G401 (cell line): ENCODE measurements at regions of chr19 and their contacts with region 1.

Region 1: DNA sequence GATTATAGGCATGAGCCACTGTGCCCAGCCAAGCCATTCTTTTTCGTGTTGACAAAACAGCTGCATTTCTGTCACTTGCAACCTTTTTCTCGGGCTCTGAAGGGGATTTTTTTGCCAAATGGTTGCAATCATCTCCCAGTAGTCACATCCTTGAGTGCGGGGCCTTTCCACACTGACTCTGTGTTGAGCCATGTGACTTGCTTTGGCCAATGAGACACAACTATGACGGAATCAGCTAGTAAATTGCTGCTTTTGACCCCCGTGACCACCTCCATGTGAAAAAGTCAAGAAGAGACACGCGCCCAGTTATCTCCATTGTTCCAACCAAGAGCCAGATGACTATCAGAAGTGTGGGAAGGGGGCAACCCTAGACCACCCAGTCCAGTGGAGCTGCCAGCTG is 18.3 kb downstream of the NPHS1 start:
- DNase-seq: no peak

Region 2: DNA sequence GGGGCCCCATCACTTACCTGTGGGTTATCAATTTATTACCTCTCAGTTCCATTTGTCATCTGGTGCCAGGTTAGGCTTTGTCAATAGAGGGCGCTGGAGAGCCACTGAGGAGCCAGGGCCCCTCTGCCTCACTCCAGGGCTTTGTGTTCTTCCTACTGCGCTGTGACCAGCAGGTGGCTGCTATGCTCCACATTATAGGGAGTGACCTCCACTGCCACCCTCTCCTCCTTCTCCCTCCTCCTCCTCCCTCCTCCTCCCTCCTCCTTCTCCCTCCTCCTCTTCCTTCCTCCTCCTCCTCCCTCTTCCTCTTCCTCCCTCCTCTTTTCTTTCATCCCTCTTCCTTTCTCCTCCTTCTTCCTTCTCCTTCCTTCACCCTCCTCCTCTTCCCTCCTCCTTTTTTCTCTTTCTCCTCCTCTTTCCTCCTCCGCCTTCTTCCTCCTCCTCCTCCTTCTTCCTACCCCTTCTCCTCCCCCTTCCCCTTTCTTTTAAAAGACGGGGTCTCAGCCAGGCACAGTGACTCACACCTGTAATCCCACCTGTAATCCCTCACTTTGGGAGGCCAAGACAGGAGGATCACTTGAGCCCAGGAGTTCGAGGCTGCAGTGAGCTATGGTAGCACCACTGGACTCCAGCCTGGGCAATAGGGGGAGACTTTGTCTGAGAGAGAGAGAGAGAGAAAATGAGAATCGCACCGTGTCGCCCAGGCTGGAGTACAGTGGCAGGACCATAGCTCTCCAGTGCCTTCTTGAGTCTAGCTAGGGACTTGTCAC is 140.0 kb before region 1 on chr19:
- in situ Hi-C with region 1: loop called (anchors 10 kb)
- DNase-seq: peak; percentile 91

Region 3: DNA sequence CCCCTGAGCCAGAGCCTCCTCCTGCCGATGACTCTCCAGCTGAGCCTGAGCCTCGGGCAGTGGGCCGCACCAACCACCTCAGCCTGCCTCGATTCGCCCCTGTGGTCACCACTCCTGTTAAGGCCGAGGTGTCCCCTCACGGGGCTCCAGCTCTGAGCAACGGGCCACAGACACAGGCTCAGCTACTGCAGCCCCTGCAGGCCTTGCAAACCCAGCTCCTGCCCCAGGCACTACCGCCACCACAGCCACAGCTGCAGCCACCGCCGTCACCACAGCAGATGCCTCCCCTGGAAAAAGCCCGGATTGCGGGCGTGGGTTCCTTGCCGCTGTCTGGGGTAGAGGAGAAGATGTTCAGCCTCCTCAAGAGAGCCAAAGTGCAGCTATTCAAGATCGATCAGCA is 112.6 kb before region 1 on chr19:
- in situ Hi-C with region 1: no loop called
- DNase-seq: no peak

Region 4: GRCh38 chr19:35913589-35913988 is 79.6 kb after region 1 on chr19:
- in situ Hi-C with region 1: no loop called
- DNase-seq: no peak